Psoas muscle (tissue), 8 donors: ENCODE measurements at regions of chr1 and their contacts with region 1.

Region 1: DNA sequence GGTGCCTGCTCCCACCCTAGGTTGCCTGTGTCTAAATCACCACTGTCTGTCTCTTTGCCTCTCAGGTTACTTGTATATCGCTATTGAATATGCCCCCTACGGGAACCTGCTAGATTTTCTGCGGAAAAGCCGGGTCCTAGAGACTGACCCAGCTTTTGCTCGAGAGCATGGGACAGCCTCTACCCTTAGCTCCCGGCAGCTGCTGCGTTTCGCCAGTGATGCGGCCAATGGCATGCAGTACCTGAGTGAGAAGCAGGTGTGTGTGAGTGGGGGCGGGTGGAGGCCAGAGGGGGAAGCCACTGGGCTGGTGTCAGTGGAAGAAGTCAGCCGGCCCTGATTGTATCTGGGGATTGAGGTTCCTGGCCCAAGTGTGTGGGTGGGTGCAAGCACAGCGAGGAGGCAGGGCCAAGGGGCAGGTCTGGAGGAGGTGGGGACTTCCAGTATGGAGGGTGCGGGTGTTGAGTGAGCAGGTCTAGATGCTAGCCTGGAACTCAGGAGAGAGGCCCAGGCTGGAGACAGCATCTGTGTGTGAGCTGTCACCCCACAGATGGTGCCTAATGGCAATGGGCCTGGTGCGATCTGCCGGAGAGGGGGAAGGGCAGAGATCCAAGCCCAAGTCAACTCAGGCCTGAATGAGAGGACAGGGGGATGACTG is 17.2 kb downstream of the TIE1 start:
- DNase-seq: no peak
- ATAC-seq: no peak
- H3K4me3 ChIP-seq: no peak overlapping the region
- H3K27ac ChIP-seq: no peak overlapping the region
- H3K4me1 ChIP-seq: no peaks in the 10 kb centered on the region
- H3K27me3 ChIP-seq: no peaks in the 10 kb centered on the region
- CTCF ChIP-seq: no peak

Region 2: DNA sequence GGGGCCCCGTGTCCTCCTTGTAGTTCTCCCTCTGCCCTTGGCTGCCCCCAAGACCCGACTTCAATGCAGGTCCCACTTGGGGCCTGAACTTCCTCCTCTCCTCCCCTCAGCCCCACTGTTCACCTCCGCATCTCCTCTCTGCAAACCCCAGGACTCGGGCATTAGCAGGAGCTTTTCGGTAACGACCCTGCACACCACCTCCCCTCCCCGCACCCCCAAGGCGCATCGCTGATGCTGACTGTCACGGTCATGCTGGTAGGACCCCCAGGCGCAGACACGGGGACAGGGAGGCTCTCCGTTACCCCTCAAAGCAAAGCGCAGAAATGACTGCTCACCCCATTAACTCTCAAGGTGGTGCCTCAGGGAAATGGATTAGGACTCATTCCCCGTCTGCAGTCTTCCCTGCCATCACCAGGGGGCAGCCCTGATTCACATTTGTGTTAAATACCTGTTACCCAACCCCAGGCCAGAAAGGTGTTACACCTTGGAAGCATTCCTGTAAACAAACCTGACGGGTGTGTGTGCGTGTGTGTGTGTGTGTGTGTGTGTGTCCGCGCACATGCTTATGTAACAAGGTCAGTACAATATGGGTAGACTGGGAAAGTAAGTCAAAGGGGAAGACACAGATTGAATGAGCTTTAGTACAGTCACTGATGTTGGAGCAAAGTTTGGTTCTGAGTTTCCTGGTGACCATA is 1171.2 kb before region 1 on chr1:
- intact Hi-C with region 1: loop called in 1 of 2 experiments (anchors 10 kb)
- DNase-seq: peak; percentile 49 to 68
- ATAC-seq: peak; percentile 58 to 83 (median 70)
- H3K4me3 ChIP-seq: no peak overlapping the region
- H3K27ac ChIP-seq: no peak overlapping the region
- H3K4me1 ChIP-seq: no peaks in the 10 kb centered on the region
- H3K27me3 ChIP-seq: peaks cover 3 to 66% (median 16%) of the 10 kb centered on the region in 3 donors
- CTCF ChIP-seq: peak; percentile 74

Region 3: DNA sequence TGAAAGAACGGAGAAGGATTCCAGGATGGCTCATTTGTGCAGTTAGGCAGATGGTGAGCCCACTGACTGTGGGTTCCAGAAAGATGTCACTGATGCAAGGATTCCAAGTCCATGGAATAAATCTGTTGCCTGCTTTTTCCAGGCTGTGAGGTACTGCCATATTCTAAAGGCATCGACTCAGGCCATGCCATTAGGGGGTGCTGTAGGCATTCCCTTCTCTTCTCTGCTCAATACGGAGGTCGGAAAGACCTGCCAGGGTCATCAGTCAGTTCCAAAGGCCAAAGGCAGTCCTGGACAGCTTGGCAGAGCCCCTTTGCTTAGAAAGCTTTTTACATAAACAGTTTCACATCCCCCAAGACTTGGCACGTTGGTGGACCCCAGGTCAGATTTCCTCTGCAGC is 79.9 kb before region 1 on chr1:
- intact Hi-C with region 1: no loop called
- DNase-seq: peak; percentile 39 to 57
- ATAC-seq: peak; percentile 51 to 79 (median 75)
- H3K4me3 ChIP-seq: no peak overlapping the region
- H3K27ac ChIP-seq: no peak overlapping the region
- H3K4me1 ChIP-seq: no peaks in the 10 kb centered on the region
- H3K27me3 ChIP-seq: no peaks in the 10 kb centered on the region
- CTCF ChIP-seq: peak; percentile 49